HCT116 (cell line): ENCODE measurements at regions of chr11 and their contacts with region 1.

Region 1: DNA sequence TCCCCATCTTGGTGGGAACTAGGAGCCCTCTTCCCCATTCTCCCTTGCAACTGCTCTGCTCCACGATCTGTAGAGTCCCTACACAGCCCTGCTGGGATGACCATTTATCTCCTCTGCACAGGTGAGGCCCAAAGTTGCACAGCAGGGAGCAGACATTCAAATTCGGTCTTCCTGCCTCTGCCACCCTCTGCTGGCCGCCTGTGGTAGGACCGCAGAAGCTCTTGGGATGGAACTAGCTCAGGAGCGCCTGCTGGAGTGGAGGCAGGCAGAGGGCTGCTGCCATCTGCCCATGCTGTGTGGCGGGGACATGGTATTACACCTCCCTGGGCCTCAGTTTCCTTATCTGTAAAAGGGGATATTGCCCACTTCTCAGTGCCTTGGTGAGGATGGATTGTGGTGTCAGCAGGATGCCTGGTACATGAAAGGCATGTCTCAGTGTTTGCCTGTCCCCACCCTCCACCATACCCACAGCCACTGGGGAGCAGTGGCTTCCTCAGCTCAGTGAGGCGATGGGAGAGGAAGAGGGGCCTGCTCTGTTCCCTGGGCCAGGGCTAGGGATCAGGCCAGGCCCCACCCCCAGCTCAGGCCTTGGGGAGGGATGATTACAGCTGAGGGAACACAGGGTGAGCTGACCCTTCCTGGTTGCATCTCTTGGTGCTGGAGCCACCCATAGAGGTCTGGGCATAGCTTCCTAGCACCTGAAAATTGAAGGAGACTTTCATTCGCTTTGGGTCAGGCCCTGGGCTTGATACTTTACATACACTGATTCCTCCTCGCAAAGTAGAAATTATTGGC is 11.3 kb upstream of the OMP start:
- DNase-seq: peak; percentile 68
- ATAC-seq: peak; percentile 96
- H3K4me3 ChIP-seq: no peak overlapping the region
- H3K27ac ChIP-seq: no peak overlapping the region
- H3K4me1 ChIP-seq: peaks cover 2 to 11% of the 10 kb centered on the region in 2 experiments; a peak in 1 of 4 replicates
- H3K27me3 ChIP-seq: no peaks in the 10 kb centered on the region
- CTCF ChIP-seq: peak; percentile 95 to 99 (median 97)
- POLR2A ChIP-seq: no peak
- RAD21 ChIP-seq: peak; percentile 96

Region 2: GRCh38 chr11:76734456-76735420 is 356.6 kb before region 1 on chr11:
- CTCF ChIA-PET with region 1: interaction called, 9 read pairs
- POLR2A ChIA-PET with region 1: no interaction called
- RAD21 ChIA-PET with region 1: interaction called, 3 to 4 read pairs
- intact Hi-C with region 1: loop called (anchors 1 kb)
- DNase-seq: no peak
- ATAC-seq: no peak
- H3K4me3 ChIP-seq: no peak overlapping the region
- H3K27ac ChIP-seq: no peak overlapping the region
- H3K4me1 ChIP-seq: no peaks in the 10 kb centered on the region
- H3K27me3 ChIP-seq: no peaks in the 10 kb centered on the region; the same call in 1 of the 2 replicates
- CTCF ChIP-seq: no peak
- POLR2A ChIP-seq: no peak
- RAD21 ChIP-seq: no peak

Region 3: DNA sequence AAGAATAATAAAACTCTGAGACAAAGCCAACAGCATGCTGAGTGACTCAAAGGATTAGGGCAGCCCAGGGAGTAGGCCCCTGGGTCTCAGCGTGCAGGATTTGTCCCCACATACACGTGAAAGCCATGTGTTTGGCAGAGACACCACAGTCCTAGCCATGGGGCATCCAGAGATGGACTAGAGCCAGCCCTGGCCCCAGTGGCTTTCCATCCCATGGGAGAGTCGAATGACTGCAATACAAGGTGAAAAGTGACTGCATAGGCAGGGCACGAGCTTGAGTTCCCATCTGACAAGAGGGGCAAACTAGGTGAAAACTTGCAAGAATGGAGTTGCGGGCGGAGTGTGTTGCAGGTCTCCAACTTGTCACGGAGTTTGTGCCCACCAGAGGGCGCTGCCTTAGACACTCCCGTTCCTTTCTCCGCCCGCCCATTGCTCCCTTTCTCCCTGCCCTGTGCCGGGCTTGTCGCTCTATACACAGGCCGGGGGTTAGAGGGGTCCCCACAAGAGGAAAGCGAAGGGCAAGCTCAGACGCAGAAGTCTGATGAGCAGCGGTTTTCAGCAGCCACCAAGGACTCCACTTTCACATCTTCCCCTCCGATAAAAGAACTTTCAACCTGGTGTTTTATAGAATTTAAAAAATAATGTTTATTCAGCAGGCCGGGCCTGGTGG is 284.0 kb before region 1 on chr11:
- CTCF ChIA-PET with region 1: no interaction called
- POLR2A ChIA-PET with region 1: no interaction called
- RAD21 ChIA-PET with region 1: no interaction called
- intact Hi-C with region 1: loop called (anchors 5 kb)
- DNase-seq: no peak
- ATAC-seq: peak; percentile 93
- H3K4me3 ChIP-seq: no peak overlapping the region
- H3K27ac ChIP-seq: no peak overlapping the region
- H3K4me1 ChIP-seq: peaks cover 0 to 3% of the 10 kb centered on the region in 2 experiments; a peak in 2 of 4 replicates
- H3K27me3 ChIP-seq: no peaks in the 10 kb centered on the region
- CTCF ChIP-seq: peak; percentile 77 to 83 (median 82)
- POLR2A ChIP-seq: no peak
- RAD21 ChIP-seq: peak; percentile 73

Region 4: DNA sequence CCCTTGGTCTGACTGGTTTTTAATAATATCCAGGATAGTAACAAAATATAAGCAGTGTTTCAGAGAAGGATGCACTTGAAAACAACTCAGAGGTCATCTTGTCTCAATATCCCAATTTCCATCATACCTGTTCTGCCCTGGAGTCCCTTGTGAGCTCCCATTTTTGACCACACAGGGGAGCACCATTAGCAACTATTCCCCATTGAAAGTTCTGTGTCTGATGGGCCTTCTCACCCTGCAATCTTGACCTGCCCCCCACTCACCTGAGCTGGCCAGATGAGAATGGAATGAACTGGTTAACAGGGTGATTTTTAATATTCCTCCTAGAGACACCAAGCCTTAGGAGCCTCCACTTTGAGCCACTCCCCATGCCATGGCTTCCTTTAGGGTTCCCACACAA is 28.4 kb before region 1 on chr11:
- CTCF ChIA-PET with region 1: interaction called, 41 read pairs
- POLR2A ChIA-PET with region 1: interaction called, 4 read pairs
- RAD21 ChIA-PET with region 1: interaction called in 1 of 2 experiments, 5 read pairs
- intact Hi-C with region 1: no loop called
- DNase-seq: no peak
- ATAC-seq: no peak
- H3K4me3 ChIP-seq: no peak overlapping the region
- H3K27ac ChIP-seq: no peak overlapping the region
- H3K4me1 ChIP-seq: peaks cover 7 to 16% of the 10 kb centered on the region in 2 experiments; a peak in 2 of 4 replicates
- H3K27me3 ChIP-seq: no peaks in the 10 kb centered on the region
- CTCF ChIP-seq: peak; percentile 14 to 61 (median 42); a peak in 2 of 6 replicates
- POLR2A ChIP-seq: no peak
- RAD21 ChIP-seq: no peak

Region 5: DNA sequence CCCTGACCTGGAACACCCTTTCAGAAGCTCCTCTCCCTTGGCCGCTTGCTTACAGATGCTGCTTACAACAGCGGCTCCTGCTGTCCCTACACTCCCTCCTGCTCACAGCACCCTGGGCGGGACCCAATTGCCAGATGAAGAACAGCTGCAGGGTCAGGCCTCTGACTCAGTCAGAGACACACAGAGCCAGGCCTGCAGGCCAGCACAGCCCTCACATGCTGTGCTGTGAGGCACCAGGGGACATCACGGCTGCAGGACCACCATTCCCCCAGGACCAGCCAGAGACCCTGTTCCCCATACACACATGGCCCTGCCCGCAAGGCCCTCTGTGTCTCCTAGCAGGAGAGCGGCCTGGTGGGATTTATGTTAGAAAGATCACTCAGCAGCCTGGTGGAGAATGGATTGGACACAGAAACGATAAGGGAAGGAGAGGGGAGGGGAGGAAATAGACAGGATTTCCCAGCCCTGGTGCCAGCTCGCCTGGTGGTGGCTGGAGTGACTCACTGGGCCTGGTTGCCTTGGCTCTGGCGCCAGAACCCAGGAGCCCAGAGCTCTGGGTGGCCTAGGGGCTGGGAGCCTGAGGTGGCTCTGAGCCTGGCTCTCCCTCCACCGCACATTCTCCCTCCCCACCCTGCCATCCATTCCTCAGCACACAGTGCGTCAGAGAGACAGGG is 17.9 kb before region 1 on chr11:
- CTCF ChIA-PET with region 1: interaction called, 17 read pairs
- POLR2A ChIA-PET with region 1: no interaction called
- RAD21 ChIA-PET with region 1: no interaction called
- intact Hi-C with region 1: no loop called
- DNase-seq: peak; percentile 36
- ATAC-seq: peak; percentile 89
- H3K4me3 ChIP-seq: no peak overlapping the region
- H3K27ac ChIP-seq: peak overlapping the region; percentile 68
- H3K4me1 ChIP-seq: peaks cover 25 to 32% of the 10 kb centered on the region in 2 experiments
- H3K27me3 ChIP-seq: no peaks in the 10 kb centered on the region
- CTCF ChIP-seq: peak; percentile 9 to 42 (median 29); a peak in 3 of 6 replicates
- POLR2A ChIP-seq: no peak
- RAD21 ChIP-seq: no peak

Region 6: DNA sequence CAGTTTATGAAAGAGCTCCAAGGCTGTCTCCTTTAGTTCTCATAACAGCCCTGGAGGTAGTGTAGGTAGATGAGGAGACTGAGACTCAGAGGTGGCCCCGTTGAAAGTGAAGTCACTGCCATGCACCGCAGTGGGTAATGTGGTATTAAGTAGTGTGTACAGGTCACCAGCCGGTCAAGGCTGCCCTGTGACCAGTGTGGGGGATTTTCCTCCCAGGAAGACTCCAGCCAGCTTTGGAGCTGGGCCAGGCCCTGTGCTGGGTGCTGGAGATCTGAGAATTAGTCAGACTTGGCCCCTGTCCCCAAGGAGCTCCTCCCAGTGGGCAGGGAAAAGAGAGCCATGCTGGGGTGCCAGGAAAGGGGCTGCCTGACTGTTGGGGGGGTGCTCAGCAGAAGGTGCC is 16.6 kb after region 1 on chr11:
- CTCF ChIA-PET with region 1: interaction called, 16 read pairs
- POLR2A ChIA-PET with region 1: interaction called, 3 read pairs
- RAD21 ChIA-PET with region 1: interaction called, 3 read pairs
- intact Hi-C with region 1: no loop called
- DNase-seq: peak; percentile 36
- ATAC-seq: peak; percentile 79
- H3K4me3 ChIP-seq: peak overlapping the region in 1 of 2 experiments; percentile 29; a peak in 2 of 4 replicates
- H3K27ac ChIP-seq: peak overlapping the region; percentile 44; the same call in 1 of the 2 replicates
- H3K4me1 ChIP-seq: peaks cover 44 to 61% of the 10 kb centered on the region in 2 experiments
- H3K27me3 ChIP-seq: no peaks in the 10 kb centered on the region
- CTCF ChIP-seq: no peak
- POLR2A ChIP-seq: no peak
- RAD21 ChIP-seq: no peak